ENCODE measurements at regions of chr4 and their contacts with region 1.

Region 1: GRCh38 chr4:83639849-83640493 is 104.1 kb downstream of the GPAT3 start:
- DNase-seq: peak; percentile 67
- H3K4me3 ChIP-seq: no peak overlapping the region
- H3K27ac ChIP-seq: no peak overlapping the region
- H3K4me1 ChIP-seq: no peaks in the 10 kb centered on the region
- H3K27me3 ChIP-seq: peaks cover 1% of the 10 kb centered on the region
- CTCF ChIP-seq: peak; percentile 46 to 86 (median 84)
- POLR2A ChIP-seq: no peak

Region 2: DNA sequence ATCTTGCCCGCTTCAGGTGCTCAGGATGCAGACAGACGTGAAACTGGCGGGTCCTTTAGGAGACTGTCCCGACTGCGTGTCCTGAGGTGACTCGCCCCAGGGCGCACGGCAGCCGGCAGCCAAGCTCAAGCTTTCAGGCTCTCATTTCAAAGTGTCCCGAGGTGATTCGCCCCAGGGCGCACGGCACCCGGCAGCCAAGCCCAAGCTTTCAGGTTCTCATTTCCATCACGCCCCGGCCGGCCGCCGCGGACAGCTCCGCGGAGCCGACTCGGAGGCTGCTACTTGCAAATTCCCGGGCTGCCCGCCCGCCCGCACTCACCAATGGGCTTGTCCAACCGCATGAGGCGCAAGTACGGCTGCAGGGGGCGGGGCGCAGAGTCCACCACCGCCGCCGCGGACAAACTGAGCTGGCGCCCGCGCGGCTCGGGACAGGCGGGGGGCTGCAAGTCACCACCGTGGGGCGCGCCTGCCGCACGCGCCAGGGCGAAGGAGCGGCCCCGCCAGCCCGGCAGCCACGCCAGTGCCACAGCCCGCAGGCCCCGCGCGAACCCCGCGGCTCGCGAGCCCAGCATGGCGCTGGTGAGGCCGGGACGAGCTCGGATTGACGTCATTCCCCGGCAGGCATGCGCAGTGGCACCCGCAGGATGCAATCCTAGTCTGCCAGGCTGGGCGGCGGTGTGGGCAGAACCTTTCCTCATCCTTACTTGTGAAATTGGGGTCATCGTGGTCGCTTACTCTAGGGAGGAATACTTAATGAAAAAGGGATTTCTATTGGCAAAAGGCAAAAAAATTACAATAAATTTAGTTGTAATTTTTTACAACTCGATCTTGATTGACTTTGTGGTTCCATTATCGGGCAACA is 355.5 kb before region 1 on chr4 and contains the start of gene COQ2:
- intact Hi-C with region 1: loop called (anchors 10 kb)
- DNase-seq: peak; percentile 93
- H3K4me3 ChIP-seq: peak within 1 kb of the TSS; percentile 66 to 71
- H3K27ac ChIP-seq: peak within 1 kb of the TSS; percentile 93 to 95
- H3K4me1 ChIP-seq: peaks cover 4% of the 10 kb centered on the region
- H3K27me3 ChIP-seq: no peaks in the 10 kb centered on the region
- CTCF ChIP-seq: peak in 3 of 4 experiments; percentile 40 to 65 (median 54)
- POLR2A ChIP-seq: peak; percentile 61
- total RNA-seq, gene COQ2: 12.8 to 13.1 TPM

Region 3: DNA sequence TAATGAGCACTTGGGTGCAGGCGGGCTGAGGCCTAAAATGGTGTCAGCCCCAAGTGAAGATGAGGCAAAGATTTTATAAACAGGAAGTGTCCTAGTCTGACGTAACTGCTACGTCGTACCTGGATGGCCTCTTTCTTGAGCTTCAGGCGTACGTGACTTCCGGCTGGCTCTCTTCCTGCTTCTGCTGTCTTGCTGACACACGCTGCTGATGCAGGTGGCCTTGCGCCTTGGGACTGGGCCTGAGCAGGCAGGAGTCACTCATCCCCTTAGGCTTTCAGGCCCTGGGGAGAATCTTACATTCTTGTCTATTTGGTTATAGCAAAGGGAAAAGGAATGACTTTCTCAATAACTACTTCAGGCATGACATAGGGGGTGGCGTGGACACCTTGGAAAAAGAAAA is 135.0 kb before region 1 on chr4:
- intact Hi-C with region 1: loop called (anchors 5 kb)
- DNase-seq: no peak
- H3K4me3 ChIP-seq: no peak overlapping the region
- H3K27ac ChIP-seq: no peak overlapping the region
- H3K4me1 ChIP-seq: no peaks in the 10 kb centered on the region
- H3K27me3 ChIP-seq: no peaks in the 10 kb centered on the region
- CTCF ChIP-seq: no peak
- POLR2A ChIP-seq: no peak

Region 4: DNA sequence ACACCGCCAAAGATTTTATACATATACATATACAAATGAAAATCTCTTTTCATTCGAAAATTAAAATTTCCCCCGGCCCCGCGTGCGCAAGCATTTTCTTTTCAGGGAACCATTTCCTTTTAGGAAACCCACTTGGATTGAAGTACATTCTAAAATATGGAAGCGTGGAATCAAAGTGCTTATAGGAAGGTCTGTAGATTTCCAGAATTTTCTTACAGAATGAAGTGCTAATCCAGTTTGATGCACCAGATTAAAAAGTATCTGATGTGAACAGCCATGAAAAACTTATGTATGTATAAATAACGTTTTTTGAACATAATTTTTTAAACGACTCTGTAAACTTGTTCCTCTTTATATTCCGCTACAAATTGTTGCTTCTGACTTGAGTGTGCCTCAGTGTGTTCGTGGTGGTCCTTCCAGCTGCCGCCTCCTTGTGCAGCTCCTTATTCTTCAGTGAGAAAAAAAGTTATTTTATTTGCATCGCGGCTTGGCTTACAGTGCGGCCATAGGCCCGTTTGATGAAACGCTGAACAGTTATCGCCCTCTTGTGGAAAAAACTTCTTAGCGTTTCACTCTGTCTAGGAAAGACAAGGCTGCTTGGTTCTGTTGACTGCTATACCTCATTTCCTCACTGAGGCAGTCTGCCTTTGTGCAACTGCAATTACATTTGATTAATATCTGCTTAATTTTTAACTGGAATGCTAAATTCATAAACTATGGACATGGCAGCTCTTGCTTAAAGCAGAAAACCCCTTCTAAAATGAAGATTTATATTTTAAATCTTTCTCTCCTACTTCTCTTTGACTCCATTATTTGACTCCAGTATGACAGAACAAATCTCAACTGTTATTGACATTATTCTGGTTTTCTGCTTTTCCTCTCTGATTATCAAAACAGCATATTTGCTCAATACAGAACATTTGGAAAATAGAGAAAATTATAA is 863.8 kb after region 1 on chr4:
- intact Hi-C with region 1: loop called (anchors 10 kb)
- DNase-seq: peak; percentile 30
- H3K4me3 ChIP-seq: no peak overlapping the region
- H3K27ac ChIP-seq: no peak overlapping the region
- H3K4me1 ChIP-seq: no peaks in the 10 kb centered on the region
- H3K27me3 ChIP-seq: peaks cover 50% of the 10 kb centered on the region
- CTCF ChIP-seq: peak in 3 of 4 experiments; percentile 31 to 52 (median 38)
- POLR2A ChIP-seq: no peak

Measured in prostate gland (tissue), 2 donors.